Activated B cell treated with CpG ODN at 0.5 μM for 24 hours (primary cell): ENCODE measurements at regions of chr3 and their contacts with region 1.

Region 1: GRCh38 chr3:112908252-112908651 is 61.6 kb upstream of the CD200R1L start:
- DNase-seq: no peak
- ATAC-seq: peak; percentile 93
- H3K4me3 Mint-ChIP-seq: peak overlapping the region; percentile 73
- H3K27ac Mint-ChIP-seq: peak overlapping the region; percentile 95
- H3K4me1 Mint-ChIP-seq: peaks cover 67% of the 10 kb centered on the region
- H3K27me3 Mint-ChIP-seq: no peaks in the 10 kb centered on the region
- CTCF ChIP-seq: no peak

Region 2: GRCh38 chr3:112829031-112829430 is 79.2 kb before region 1 on chr3:
- CTCF ChIA-PET with region 1: no interaction called
- POLR2A ChIA-PET with region 1: no interaction called
- intact Hi-C with region 1: no loop called
- DNase-seq: no peak
- ATAC-seq: no peak
- H3K4me3 Mint-ChIP-seq: no peak overlapping the region
- H3K27ac Mint-ChIP-seq: no peak overlapping the region
- H3K4me1 Mint-ChIP-seq: peaks cover 2% of the 10 kb centered on the region
- H3K27me3 Mint-ChIP-seq: no peaks in the 10 kb centered on the region
- CTCF ChIP-seq: no peak

Region 3: DNA sequence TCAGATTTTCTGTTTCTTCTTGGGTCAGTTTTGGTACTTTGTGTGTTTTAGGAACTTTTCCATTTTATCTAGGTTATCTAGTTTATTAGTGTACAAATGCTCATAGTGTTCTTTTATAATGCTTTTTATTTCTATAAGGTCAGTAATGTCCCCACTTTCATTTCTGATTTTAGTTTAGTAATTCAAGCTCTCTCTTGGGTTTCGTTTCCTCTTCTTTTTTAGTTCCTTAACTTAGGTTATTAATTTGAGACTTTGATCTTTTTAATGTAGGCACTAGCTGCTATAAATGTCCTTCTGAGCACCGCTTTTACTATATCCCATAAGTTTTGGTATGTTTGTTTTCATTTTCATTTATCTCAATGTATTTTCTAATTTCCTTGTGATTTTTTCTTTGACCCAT is 34.6 kb before region 1 on chr3:
- CTCF ChIA-PET with region 1: no interaction called
- POLR2A ChIA-PET with region 1: no interaction called
- intact Hi-C with region 1: loop called (anchors 2 kb)
- DNase-seq: no peak
- ATAC-seq: peak; percentile 79
- H3K4me3 Mint-ChIP-seq: peak overlapping the region; percentile 75
- H3K27ac Mint-ChIP-seq: peak overlapping the region; percentile 80
- H3K4me1 Mint-ChIP-seq: peaks cover 43% of the 10 kb centered on the region
- H3K27me3 Mint-ChIP-seq: no peaks in the 10 kb centered on the region
- CTCF ChIP-seq: no peak

Region 4: DNA sequence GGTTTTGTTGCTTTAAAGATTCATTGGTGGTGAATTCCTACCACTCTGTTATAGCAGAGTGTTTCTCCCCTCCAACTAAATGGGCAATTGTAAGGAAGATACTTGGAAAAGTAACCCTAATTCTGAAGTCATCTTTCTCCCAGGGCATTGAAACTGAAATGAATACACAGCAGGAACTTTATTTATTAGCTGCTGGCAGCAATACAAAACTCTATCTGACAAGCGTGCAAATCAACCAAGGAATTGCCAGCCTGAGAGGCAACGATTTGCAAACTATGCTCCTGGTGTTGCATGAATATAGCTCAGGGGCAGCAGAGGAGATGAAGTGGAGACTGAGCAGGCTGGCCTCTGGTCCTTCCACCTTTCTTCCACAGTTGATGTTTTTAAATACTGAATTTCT is 17.7 kb after region 1 on chr3:
- CTCF ChIA-PET with region 1: no interaction called
- POLR2A ChIA-PET with region 1: no interaction called
- intact Hi-C with region 1: loop called (anchors 2 kb)
- DNase-seq: no peak
- ATAC-seq: no peak
- H3K4me3 Mint-ChIP-seq: no peak overlapping the region
- H3K27ac Mint-ChIP-seq: no peak overlapping the region
- H3K4me1 Mint-ChIP-seq: peaks cover 19% of the 10 kb centered on the region
- H3K27me3 Mint-ChIP-seq: no peaks in the 10 kb centered on the region
- CTCF ChIP-seq: no peak

Region 5: DNA sequence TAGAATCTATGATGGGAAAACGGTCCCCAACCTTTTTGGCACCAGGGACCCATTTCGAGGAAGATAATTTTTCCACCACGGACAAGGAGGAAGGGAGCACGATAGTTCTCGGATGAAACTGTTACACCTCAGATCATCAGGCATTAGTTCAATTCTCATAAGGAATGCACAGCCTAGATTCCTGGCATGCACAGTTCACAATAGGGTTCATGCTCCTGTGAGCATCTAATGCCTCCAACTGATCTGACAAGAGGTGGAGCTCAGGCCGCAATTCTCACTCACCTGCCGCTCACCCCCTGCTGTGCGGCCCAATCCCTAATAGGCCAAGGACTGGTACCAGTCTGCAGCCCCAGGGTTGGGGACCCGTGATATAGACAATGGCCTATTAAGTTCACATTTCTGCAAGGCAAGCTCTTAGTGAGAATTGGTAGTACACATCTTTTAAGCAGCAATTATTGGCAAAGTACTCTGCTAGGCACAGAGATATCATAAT is 40.1 kb after region 1 on chr3:
- CTCF ChIA-PET with region 1: no interaction called
- POLR2A ChIA-PET with region 1: no interaction called
- intact Hi-C with region 1: loop called (anchors 5 kb)
- DNase-seq: no peak
- ATAC-seq: no peak
- H3K4me3 Mint-ChIP-seq: no peak overlapping the region
- H3K27ac Mint-ChIP-seq: no peak overlapping the region
- H3K4me1 Mint-ChIP-seq: peaks cover 4% of the 10 kb centered on the region
- H3K27me3 Mint-ChIP-seq: no peaks in the 10 kb centered on the region
- CTCF ChIP-seq: no peak

Region 6: GRCh38 chr3:112973325-112974177 is 65.3 kb after region 1 on chr3:
- CTCF ChIA-PET with region 1: no interaction called
- POLR2A ChIA-PET with region 1: interaction called, 4 read pairs
- intact Hi-C with region 1: loop called (anchors 5 kb)
- DNase-seq: no peak
- ATAC-seq: peak; percentile 75
- H3K4me3 Mint-ChIP-seq: peak overlapping the region; percentile 84
- H3K27ac Mint-ChIP-seq: peak overlapping the region; percentile 76
- H3K4me1 Mint-ChIP-seq: peaks cover 80% of the 10 kb centered on the region
- H3K27me3 Mint-ChIP-seq: no peaks in the 10 kb centered on the region
- CTCF ChIP-seq: no peak

Region 7: DNA sequence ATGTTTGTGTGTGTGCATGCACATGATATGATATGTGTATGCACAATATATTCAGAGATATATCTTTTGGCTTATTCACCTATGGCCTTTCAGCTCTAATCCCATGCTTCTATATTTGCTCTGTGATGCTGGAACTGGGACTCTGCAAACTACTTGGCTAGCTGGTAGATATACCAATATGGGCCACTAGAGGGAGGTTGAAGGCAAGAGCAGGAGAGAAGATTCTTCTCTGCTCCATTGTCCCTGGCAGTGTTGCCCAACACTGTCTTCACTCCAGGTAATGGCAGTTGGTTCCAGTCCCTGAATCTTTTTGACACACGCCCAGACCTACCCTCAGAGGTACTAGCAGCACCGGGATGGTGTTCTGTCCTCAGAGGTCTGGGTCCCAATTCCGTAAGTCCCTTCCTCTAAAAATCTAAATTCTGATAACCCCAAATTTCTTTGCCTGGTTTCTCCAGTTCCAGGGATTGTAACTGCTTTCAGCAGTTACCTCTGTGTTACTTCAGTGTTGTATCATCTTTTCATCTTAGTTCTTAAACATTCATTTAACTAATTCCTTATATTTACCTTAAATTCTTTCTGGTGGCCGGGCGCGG is 127.2 kb after region 1 on chr3:
- CTCF ChIA-PET with region 1: no interaction called
- POLR2A ChIA-PET with region 1: no interaction called
- intact Hi-C with region 1: no loop called
- DNase-seq: no peak
- ATAC-seq: peak; percentile 88
- H3K4me3 Mint-ChIP-seq: no peak overlapping the region
- H3K27ac Mint-ChIP-seq: no peak overlapping the region
- H3K4me1 Mint-ChIP-seq: no peaks in the 10 kb centered on the region
- H3K27me3 Mint-ChIP-seq: no peaks in the 10 kb centered on the region
- CTCF ChIP-seq: no peak

Region 8: GRCh38 chr3:113649174-113649845 is 741.1 kb after region 1 on chr3:
- CTCF ChIA-PET with region 1: no interaction called
- POLR2A ChIA-PET with region 1: no interaction called
- intact Hi-C with region 1: no loop called
- DNase-seq: no peak
- ATAC-seq: no peak
- H3K4me3 Mint-ChIP-seq: no peak overlapping the region
- H3K27ac Mint-ChIP-seq: no peak overlapping the region
- H3K4me1 Mint-ChIP-seq: peaks cover 10% of the 10 kb centered on the region
- H3K27me3 Mint-ChIP-seq: no peaks in the 10 kb centered on the region
- CTCF ChIP-seq: no peak